ENCODE measurements at regions of chr16 and their contacts with region 1.

Region 1: GRCh38 chr16:4517812-4518680 is 20.5 kb downstream of the CDIP1 start:
- DNase-seq: peak; percentile 80
- ATAC-seq: peak; percentile 89
- H3K4me3 Mint-ChIP-seq: no peak overlapping the region
- H3K27ac Mint-ChIP-seq: peak overlapping the region; percentile 80
- H3K4me1 Mint-ChIP-seq: peaks cover 43% of the 10 kb centered on the region
- H3K27me3 Mint-ChIP-seq: no peaks in the 10 kb centered on the region
- CTCF ChIP-seq: peak; percentile 62

Region 2: GRCh38 chr16:4529085-4530060 is 11.3 kb after region 1 on chr16:
- CTCF ChIA-PET with region 1: interaction called, 20 read pairs
- POLR2A ChIA-PET with region 1: interaction called, 5 read pairs
- DNase-seq: peak; percentile 71
- ATAC-seq: peak; percentile 70
- H3K4me3 Mint-ChIP-seq: peak overlapping the region; percentile 40
- H3K27ac Mint-ChIP-seq: peak overlapping the region; percentile 98
- H3K4me1 Mint-ChIP-seq: peaks cover 33% of the 10 kb centered on the region
- H3K27me3 Mint-ChIP-seq: no peaks in the 10 kb centered on the region
- CTCF ChIP-seq: no peak

Region 3: GRCh38 chr16:4550591-4550990 is 32.5 kb after region 1 on chr16:
- CTCF ChIA-PET with region 1: interaction called, 115 read pairs
- POLR2A ChIA-PET with region 1: interaction called, 6 read pairs
- DNase-seq: no peak
- ATAC-seq: no peak
- H3K4me3 Mint-ChIP-seq: no peak overlapping the region
- H3K27ac Mint-ChIP-seq: peak overlapping the region; percentile 92; the same call in 1 of the 2 replicates
- H3K4me1 Mint-ChIP-seq: no peaks in the 10 kb centered on the region
- H3K27me3 Mint-ChIP-seq: peaks cover 10% of the 10 kb centered on the region; the same call in 1 of the 2 replicates
- CTCF ChIP-seq: no peak

Region 4: GRCh38 chr16:4580245-4580644 is 62.2 kb after region 1 on chr16:
- CTCF ChIA-PET with region 1: interaction called, 59 read pairs
- POLR2A ChIA-PET with region 1: no interaction called
- DNase-seq: no peak
- ATAC-seq: no peak
- H3K4me3 Mint-ChIP-seq: no peak overlapping the region
- H3K27ac Mint-ChIP-seq: no peak overlapping the region
- H3K4me1 Mint-ChIP-seq: no peaks in the 10 kb centered on the region
- H3K27me3 Mint-ChIP-seq: no peaks in the 10 kb centered on the region
- CTCF ChIP-seq: no peak

Region 5: GRCh38 chr16:4624015-4624826 is 106.2 kb after region 1 on chr16 and contains the start of gene MGRN1:
- CTCF ChIA-PET with region 1: interaction called, 19 read pairs
- POLR2A ChIA-PET with region 1: no interaction called
- DNase-seq: peak; percentile 94
- ATAC-seq: peak; percentile 93
- H3K4me3 Mint-ChIP-seq: peak within 1 kb of the TSS; percentile 97
- H3K27ac Mint-ChIP-seq: peak within 1 kb of the TSS; percentile 97
- H3K4me1 Mint-ChIP-seq: peaks cover 17% of the 10 kb centered on the region
- H3K27me3 Mint-ChIP-seq: no peaks in the 10 kb centered on the region
- CTCF ChIP-seq: peak; percentile 84
- total RNA-seq, gene MGRN1: 79.4 to 88.8 TPM (median 80.7 TPM) in 3 replicates

Region 6: GRCh38 chr16:4634768-4635167 is 116.7 kb after region 1 on chr16:
- CTCF ChIA-PET with region 1: no interaction called
- POLR2A ChIA-PET with region 1: no interaction called
- DNase-seq: no peak
- ATAC-seq: no peak
- H3K4me3 Mint-ChIP-seq: no peak overlapping the region
- H3K27ac Mint-ChIP-seq: peak overlapping the region; percentile 74; the same call in 1 of the 2 replicates
- H3K4me1 Mint-ChIP-seq: 0 out of 2 replicates have a peak, but pooled peaks cover 4% of the 10 kb centered on the region
- H3K27me3 Mint-ChIP-seq: no peaks in the 10 kb centered on the region
- CTCF ChIP-seq: no peak

Measured in WTC11 (cell line).